ENCODE measurements at regions of chr17 and their contacts with region 1.

Region 1: GRCh38 chr17:18217412-18218015 is 7.9 kb upstream of the LLGL1 start:
- DNase-seq: peak; percentile 71 to 97
- ATAC-seq: peak; percentile 87 to 95
- H3K4me3 ChIP-seq: no peak overlapping the region
- H3K27ac ChIP-seq: no peak overlapping the region
- H3K4me1 ChIP-seq: peaks cover 7% of the 10 kb centered on the region; the same call in 2 of the 3 replicates
- CTCF ChIP-seq: peak; percentile 85
- EP300 ChIP-seq: no peak
- POLR2A ChIP-seq: no peak
- RAD21 ChIP-seq: peak; percentile 84 to 93

Region 2: GRCh38 chr17:18203308-18203707 is 14.2 kb before region 1 on chr17:
- CTCF ChIA-PET with region 1: interaction called, 106 read pairs
- POLR2A ChIA-PET with region 1: interaction called, 4 read pairs
- DNase-seq: no peak
- ATAC-seq: peak in 1 of 2 experiments; percentile 50; a peak in 2 of 6 replicates
- H3K4me3 ChIP-seq: no peak overlapping the region
- H3K27ac ChIP-seq: 0 out of 6 replicates have a peak overlapping the region, but pooled peaks of 1 of the 2 experiments have one; percentile 6
- H3K4me1 ChIP-seq: peaks cover 14% of the 10 kb centered on the region
- CTCF ChIP-seq: no peak
- EP300 ChIP-seq: no peak
- POLR2A ChIP-seq: no peak
- RAD21 ChIP-seq: no peak

Region 3: GRCh38 chr17:18235743-18236256 is 18.3 kb after region 1 on chr17:
- CTCF ChIA-PET with region 1: interaction called, 36 read pairs
- POLR2A ChIA-PET with region 1: no interaction called
- DNase-seq: no peak
- ATAC-seq: peak in 1 of 2 experiments; percentile 15; a peak in 3 of 6 replicates
- H3K4me3 ChIP-seq: no peak overlapping the region
- H3K27ac ChIP-seq: peak overlapping the region in 1 of 2 experiments; percentile 52; a peak in 2 of 6 replicates
- H3K4me1 ChIP-seq: peaks cover 6% of the 10 kb centered on the region; the same call in 1 of the 3 replicates
- CTCF ChIP-seq: no peak
- EP300 ChIP-seq: no peak
- POLR2A ChIP-seq: no peak
- RAD21 ChIP-seq: no peak

Region 4: DNA sequence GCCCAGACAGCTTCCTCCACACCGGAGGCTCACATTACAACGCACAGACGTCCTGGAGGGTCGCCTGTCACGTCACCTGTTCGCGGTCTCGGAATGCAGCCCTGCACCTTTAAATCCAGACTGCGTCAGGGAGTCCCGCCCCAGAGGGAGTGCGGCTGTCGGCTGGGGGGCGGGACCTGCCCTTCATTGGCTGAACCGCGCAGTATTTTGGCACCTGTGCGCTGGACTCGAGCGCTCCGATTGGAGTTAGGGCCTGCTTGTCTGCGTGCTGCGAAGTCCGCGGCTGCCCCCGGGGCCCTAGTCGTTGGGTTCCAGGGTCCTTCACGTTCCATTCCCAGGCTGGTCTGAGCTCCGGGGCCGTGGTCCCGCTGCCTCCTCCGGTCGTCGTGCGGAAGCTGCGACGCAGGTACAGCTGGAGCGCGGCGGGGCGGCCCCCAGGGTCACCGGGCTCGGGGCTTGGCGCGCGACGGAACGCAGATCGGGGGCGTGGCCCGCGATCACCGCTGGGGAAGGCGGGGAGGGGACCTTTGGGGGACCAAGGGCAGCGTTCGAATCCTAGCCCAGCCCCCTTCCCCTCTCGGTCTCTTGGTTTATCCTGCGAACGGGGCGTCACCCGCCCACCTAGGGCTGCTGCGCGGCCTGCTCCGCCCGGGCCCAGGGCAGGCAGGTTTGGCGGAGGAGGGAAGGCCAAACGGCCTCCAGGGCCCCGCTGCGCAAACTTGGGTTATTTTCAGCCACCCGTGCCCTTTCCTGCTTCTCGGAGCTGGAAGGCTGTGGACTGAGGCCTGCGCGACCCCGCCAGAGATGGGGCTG is 43.0 kb after region 1 on chr17 and contains the start of gene MIEF2:
- CTCF ChIA-PET with region 1: interaction called, 7 read pairs
- POLR2A ChIA-PET with region 1: interaction called, 11 read pairs
- DNase-seq: peak; percentile 96 to 100
- ATAC-seq: peak; percentile 72 to 88
- H3K4me3 ChIP-seq: peak within 1 kb of the TSS; percentile 76
- H3K27ac ChIP-seq: peak within 1 kb of the TSS; percentile 84 to 91
- H3K4me1 ChIP-seq: peaks cover 31% of the 10 kb centered on the region
- CTCF ChIP-seq: no peak
- EP300 ChIP-seq: no peak
- POLR2A ChIP-seq: peak; percentile 51
- RAD21 ChIP-seq: no peak
- polyA plus RNA-seq, gene MIEF2: 3.7 and 4.3 TPM in 2 replicates

Measured in A549 (cell line).